Gastrocnemius medialis (tissue), 4 donors: ENCODE measurements at regions of chr1 and their contacts with region 1.

Region 1: DNA sequence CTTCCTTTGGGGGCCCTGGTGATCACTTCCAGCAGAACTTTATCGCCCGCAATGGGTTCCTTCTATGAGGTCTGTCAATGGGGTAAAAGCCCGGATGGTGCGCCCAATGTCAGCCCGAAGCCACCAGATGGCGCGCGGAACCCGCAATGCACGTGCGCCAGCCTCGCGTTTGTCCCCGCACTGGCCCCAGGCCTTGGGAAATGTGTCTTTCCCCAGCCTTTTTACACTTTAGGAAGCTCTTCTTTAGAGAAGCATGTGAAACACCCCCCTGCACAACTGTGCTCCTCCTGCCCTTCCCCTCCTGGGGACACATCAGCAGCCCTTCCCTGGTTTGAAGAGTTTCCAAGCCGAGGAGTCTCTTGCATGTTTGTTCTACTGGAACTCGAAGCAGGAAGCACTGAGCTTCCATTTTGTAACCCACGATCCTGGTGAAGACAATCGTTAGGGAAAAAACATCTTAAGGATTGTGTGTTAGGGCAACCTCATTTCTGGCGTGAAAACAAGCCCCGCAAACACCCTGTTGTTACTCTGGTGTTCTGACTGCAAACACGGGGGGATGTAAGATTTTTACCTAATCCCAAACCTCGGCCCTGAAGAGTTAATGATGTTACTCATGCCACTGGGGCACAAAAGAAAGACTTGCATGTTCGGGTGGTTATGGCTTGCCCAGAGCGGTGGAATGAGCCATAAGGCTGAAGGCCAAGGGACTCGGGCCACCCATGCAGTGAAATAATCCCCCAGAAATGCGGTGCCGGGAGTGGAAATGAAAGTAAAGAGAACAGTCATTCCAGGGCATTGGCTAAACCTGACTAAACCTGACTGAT is 20.4 kb upstream of the TARBP1 start:
- DNase-seq: peak; percentile 82 to 90
- ATAC-seq: peak; percentile 72 to 74
- H3K4me3 ChIP-seq: peak overlapping the region; percentile 38 to 55 (median 46)
- H3K27ac ChIP-seq: peak overlapping the region; percentile 88 to 95 (median 88)
- H3K4me1 ChIP-seq: peaks cover 47 to 51% of the 10 kb centered on the region in 2 donors
- H3K27me3 ChIP-seq: no peaks in the 10 kb centered on the region
- CTCF ChIP-seq: peak; percentile 96 to 99 (median 98)
- POLR2A ChIP-seq: peak in 1 of 2 donors; percentile 8

Region 2: GRCh38 chr1:234599617-234600417 is 100.5 kb after region 1 on chr1:
- in situ Hi-C with region 1: loop called in 3 of 4 experiments (anchors 5 to 10 kb)
- intact Hi-C with region 1: loop called (anchors 1 kb)
- DNase-seq: peak; percentile 84 to 94
- ATAC-seq: peak; percentile 66 to 69
- H3K4me3 ChIP-seq: peak overlapping the region; percentile 55 to 60 (median 56)
- H3K27ac ChIP-seq: peak overlapping the region; percentile 98
- H3K4me1 ChIP-seq: peaks cover 56 to 57% of the 10 kb centered on the region in 2 donors
- H3K27me3 ChIP-seq: no peaks in the 10 kb centered on the region
- CTCF ChIP-seq: peak in 1 of 5 experiments; percentile 46
- POLR2A ChIP-seq: peak; percentile 76 to 89

Region 3: GRCh38 chr1:234722904-234723720 is 223.8 kb after region 1 on chr1:
- in situ Hi-C with region 1: loop called (anchors 5 to 25 kb)
- intact Hi-C with region 1: loop called (anchors 2 kb)
- DNase-seq: peak in 1 of 2 donors; percentile 73
- ATAC-seq: peak; percentile 6 to 11
- H3K4me3 ChIP-seq: peak overlapping the region; percentile 5 to 27 (median 10)
- H3K27ac ChIP-seq: peak overlapping the region; percentile 93 to 98 (median 96)
- H3K4me1 ChIP-seq: peaks cover 95 to 96% of the 10 kb centered on the region in 2 donors
- H3K27me3 ChIP-seq: no peaks in the 10 kb centered on the region
- CTCF ChIP-seq: no peak
- POLR2A ChIP-seq: no peak

Region 4: DNA sequence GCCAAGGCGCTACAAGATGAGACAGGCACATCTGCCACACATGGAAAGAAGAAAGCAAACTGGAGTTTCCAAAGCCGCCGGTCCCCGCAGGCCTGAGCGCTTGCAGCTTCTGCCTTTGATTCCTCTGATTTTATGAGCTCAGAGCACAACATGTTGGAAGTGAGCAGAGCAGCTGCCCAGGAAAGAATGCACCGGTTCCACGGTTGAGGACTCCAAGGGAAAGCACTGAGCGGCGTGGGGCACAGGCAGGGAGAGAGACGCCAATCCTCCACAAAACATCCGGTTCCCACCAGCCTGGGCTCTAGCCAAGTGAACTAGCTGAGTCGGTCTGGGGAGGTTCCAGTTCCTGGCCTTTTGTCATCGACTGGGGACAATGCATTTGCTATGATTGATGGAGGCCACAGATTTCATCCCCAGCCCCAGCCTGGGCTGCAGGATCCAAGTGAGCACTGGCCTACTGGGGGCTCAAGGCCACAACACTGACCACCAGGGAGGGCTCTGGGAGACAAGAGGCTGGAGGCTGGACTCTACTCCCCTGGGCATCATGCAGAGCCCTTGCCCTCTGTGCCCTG is 363.7 kb after region 1 on chr1:
- in situ Hi-C with region 1: loop called in 3 of 4 experiments (anchors 10 to 25 kb)
- intact Hi-C with region 1: no loop called
- DNase-seq: peak; percentile 51 to 70
- ATAC-seq: peak; percentile 20 to 30
- H3K4me3 ChIP-seq: peak overlapping the region in 2 of 4 donors; percentile 2 to 17
- H3K27ac ChIP-seq: peak overlapping the region; percentile 68 to 84 (median 75)
- H3K4me1 ChIP-seq: peaks cover 39 to 40% of the 10 kb centered on the region in 2 donors
- H3K27me3 ChIP-seq: no peaks in the 10 kb centered on the region
- CTCF ChIP-seq: no peak
- POLR2A ChIP-seq: no peak

Region 5: GRCh38 chr1:234970731-234971476 is 471.6 kb after region 1 on chr1:
- in situ Hi-C with region 1: loop called in 1 of 4 experiments (anchors 10 kb)
- intact Hi-C with region 1: loop called (anchors 5 kb)
- DNase-seq: peak; percentile 83 to 93
- ATAC-seq: peak; percentile 84
- H3K4me3 ChIP-seq: peak overlapping the region; percentile 48 to 65 (median 55)
- H3K27ac ChIP-seq: peak overlapping the region; percentile 87 to 94 (median 90)
- H3K4me1 ChIP-seq: peaks cover 58 to 59% of the 10 kb centered on the region in 2 donors
- H3K27me3 ChIP-seq: no peaks in the 10 kb centered on the region
- CTCF ChIP-seq: no peak
- POLR2A ChIP-seq: peak; percentile 56 to 75

Region 6: GRCh38 chr1:235075188-235075926 is 576.0 kb after region 1 on chr1:
- in situ Hi-C with region 1: loop called in 3 of 4 experiments (anchors 5 kb)
- intact Hi-C with region 1: no loop called
- DNase-seq: peak; percentile 83 to 91
- ATAC-seq: peak; percentile 4 to 14
- H3K4me3 ChIP-seq: peak overlapping the region in 3 of 4 donors; percentile 10 to 34 (median 32)
- H3K27ac ChIP-seq: peak overlapping the region; percentile 87 to 100 (median 95)
- H3K4me1 ChIP-seq: peaks cover 77 to 82% of the 10 kb centered on the region in 2 donors
- H3K27me3 ChIP-seq: no peaks in the 10 kb centered on the region
- CTCF ChIP-seq: no peak
- POLR2A ChIP-seq: peak; percentile 80 to 85